ENCODE measurements at regions of chr4 and their contacts with region 1.

Region 1: GRCh38 chr4:123564758-123565346 is 168.3 kb downstream of the SPRY1 start:
- DNase-seq: no peak
- ATAC-seq: peak; percentile 100
- H3K4me3 Mint-ChIP-seq: no peak overlapping the region
- H3K27ac Mint-ChIP-seq: no peak overlapping the region
- H3K4me1 Mint-ChIP-seq: peaks cover 3% of the 10 kb centered on the region
- H3K27me3 Mint-ChIP-seq: peaks cover 8% of the 10 kb centered on the region
- CTCF ChIP-seq: no peak

Region 2: DNA sequence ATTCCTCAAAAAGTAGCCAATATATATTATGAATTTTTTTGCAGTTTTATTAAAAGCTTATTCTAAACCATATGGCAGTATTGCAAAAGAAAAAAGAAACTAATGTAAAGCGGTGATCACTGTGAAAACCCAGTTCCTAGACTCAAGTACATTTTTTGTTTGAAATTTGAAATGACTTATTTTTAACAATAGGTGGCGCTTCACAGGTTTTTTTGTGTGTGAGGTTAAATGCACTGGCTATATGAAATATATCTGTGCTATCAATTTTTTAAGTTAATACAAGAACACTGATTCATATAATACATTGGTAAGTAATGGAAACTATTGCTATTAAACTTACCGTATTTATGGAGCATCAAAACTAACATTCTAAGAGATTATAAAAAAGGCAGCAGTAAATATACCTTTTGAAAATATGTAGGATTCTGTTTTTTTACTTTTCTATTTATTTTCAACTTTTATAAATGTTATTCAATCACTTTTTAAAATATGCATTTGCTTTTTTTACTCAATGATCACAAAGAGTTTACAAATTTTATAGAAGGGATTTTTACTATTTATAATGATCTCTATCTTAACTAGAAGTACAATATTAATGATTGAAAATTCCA is 173.9 kb before region 1 on chr4:
- CTCF ChIA-PET with region 1: interaction called, 30 read pairs
- POLR2A ChIA-PET with region 1: no interaction called
- intact Hi-C with region 1: loop called (anchors 1 kb)
- DNase-seq: no peak
- ATAC-seq: no peak
- H3K4me3 Mint-ChIP-seq: no peak overlapping the region
- H3K27ac Mint-ChIP-seq: no peak overlapping the region
- H3K4me1 Mint-ChIP-seq: no peaks in the 10 kb centered on the region
- H3K27me3 Mint-ChIP-seq: no peaks in the 10 kb centered on the region
- CTCF ChIP-seq: no peak

Region 3: DNA sequence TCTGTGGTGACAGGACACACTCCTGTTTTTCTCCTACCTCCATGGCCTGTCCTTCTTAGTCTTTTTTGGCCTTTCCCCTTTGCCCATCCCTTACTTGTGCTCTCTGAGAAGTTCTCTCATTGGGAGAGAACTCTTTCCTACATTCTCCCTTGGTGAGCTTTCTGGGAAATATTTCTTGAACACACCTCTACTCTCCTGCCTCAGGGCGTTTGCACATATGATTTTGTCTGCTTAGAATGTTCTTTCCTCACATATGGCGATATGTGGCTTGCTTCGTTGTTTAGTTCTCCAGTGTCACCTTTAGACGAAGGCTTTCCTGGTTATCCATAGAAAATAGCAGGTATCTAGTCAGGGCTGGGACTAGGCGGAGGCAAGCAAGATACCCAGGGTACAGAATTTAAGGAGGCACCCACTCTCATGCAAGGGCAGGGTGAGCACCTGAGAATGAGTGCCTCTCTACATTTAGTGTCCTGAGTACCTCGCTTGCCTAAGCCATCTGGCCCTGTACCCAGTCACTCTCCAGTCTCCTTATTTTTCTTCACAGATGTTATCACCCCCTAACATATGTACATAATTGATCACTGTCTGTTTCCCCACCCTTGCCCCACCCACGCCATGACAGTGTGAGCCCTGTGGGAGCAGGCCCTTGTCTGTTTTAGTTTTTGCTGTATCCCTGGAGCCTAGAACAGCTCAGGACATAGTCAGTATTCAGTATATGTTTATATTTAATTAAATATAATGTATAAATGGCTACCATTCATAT is 54.8 kb before region 1 on chr4:
- CTCF ChIA-PET with region 1: no interaction called
- POLR2A ChIA-PET with region 1: no interaction called
- intact Hi-C with region 1: no loop called
- DNase-seq: no peak
- ATAC-seq: no peak
- H3K4me3 Mint-ChIP-seq: no peak overlapping the region
- H3K27ac Mint-ChIP-seq: no peak overlapping the region
- H3K4me1 Mint-ChIP-seq: peaks cover 24% of the 10 kb centered on the region
- H3K27me3 Mint-ChIP-seq: peaks cover 5% of the 10 kb centered on the region
- CTCF ChIP-seq: no peak

Region 4: DNA sequence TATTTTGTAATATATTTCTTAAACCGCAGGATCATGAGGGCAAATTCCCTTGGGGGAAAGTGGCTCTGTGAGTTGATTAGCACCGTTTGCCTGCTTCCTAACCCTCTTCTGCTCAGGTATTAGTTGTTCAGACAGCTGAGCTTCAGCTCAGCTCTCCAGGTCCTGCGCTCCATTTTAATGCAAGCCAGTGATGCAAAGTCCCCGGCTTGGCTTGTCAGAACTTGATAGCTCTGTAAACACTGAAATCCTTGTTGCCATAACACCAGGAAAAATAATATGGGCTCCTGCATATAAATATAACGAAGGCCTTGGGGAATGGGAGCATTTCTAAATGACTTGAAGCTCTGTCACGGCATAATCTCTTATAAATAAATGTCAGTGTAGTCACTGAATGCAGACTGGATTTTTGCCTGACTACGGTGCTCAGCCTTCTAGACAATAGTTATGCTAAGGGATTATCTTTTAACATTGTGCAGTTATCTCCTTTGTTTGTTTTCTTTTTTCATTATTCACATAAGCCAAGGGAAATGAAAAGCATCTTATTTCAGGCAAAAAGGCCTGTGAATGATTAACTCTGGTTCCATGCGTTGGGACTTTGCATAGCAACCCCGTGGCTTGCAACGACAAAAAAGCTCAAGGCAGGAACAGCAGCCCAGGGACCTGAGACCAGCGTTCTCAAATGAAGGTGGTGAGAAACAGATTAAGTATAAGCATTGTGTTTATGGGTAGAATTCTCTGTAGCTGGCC is 85.0 kb after region 1 on chr4:
- CTCF ChIA-PET with region 1: no interaction called
- POLR2A ChIA-PET with region 1: no interaction called
- intact Hi-C with region 1: loop called (anchors 2 kb)
- DNase-seq: no peak
- ATAC-seq: peak; percentile 50
- H3K4me3 Mint-ChIP-seq: no peak overlapping the region
- H3K27ac Mint-ChIP-seq: no peak overlapping the region
- H3K4me1 Mint-ChIP-seq: peaks cover 17% of the 10 kb centered on the region
- H3K27me3 Mint-ChIP-seq: no peaks in the 10 kb centered on the region
- CTCF ChIP-seq: no peak

Region 5: DNA sequence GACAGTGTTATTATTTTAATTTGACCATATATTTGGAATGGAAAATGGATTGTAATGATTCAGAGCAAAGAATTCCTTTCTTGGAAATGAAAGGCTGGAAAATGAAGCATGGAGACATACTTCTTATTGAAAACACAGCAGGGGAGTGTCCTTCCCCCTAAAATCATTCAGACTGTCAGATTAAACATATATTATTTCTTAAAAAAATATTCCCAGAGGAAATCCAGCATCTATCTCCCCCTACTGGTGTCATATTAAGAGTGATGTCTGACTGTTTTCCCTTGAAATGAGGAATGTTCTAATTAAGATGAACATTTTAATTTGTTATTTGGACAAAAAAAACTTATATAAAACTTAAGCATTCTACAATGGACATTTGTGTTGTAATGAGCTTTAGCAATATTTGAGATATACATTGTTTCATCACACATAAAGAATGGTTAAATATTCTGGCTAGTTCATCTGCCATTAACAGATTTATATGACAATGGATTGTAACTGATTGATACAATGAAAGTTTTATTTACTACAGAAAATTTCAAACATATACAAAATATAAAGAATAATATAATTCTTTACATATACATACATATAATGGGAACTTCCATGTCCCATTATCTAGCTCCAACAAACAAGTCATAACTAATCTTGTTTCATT is 96.4 kb after region 1 on chr4:
- CTCF ChIA-PET with region 1: interaction called, 5 read pairs
- POLR2A ChIA-PET with region 1: no interaction called
- intact Hi-C with region 1: loop called (anchors 1 kb)
- DNase-seq: no peak
- ATAC-seq: no peak
- H3K4me3 Mint-ChIP-seq: no peak overlapping the region
- H3K27ac Mint-ChIP-seq: no peak overlapping the region
- H3K4me1 Mint-ChIP-seq: peaks cover 12% of the 10 kb centered on the region
- H3K27me3 Mint-ChIP-seq: peaks cover 17% of the 10 kb centered on the region
- CTCF ChIP-seq: no peak

Region 6: GRCh38 chr4:124219389-124219788 is 654.5 kb after region 1 on chr4:
- CTCF ChIA-PET with region 1: no interaction called
- POLR2A ChIA-PET with region 1: no interaction called
- intact Hi-C with region 1: no loop called
- DNase-seq: no peak
- ATAC-seq: no peak
- H3K4me3 Mint-ChIP-seq: no peak overlapping the region
- H3K27ac Mint-ChIP-seq: no peak overlapping the region
- H3K4me1 Mint-ChIP-seq: no peaks in the 10 kb centered on the region
- H3K27me3 Mint-ChIP-seq: no peaks in the 10 kb centered on the region
- CTCF ChIP-seq: no peak

Region 7: DNA sequence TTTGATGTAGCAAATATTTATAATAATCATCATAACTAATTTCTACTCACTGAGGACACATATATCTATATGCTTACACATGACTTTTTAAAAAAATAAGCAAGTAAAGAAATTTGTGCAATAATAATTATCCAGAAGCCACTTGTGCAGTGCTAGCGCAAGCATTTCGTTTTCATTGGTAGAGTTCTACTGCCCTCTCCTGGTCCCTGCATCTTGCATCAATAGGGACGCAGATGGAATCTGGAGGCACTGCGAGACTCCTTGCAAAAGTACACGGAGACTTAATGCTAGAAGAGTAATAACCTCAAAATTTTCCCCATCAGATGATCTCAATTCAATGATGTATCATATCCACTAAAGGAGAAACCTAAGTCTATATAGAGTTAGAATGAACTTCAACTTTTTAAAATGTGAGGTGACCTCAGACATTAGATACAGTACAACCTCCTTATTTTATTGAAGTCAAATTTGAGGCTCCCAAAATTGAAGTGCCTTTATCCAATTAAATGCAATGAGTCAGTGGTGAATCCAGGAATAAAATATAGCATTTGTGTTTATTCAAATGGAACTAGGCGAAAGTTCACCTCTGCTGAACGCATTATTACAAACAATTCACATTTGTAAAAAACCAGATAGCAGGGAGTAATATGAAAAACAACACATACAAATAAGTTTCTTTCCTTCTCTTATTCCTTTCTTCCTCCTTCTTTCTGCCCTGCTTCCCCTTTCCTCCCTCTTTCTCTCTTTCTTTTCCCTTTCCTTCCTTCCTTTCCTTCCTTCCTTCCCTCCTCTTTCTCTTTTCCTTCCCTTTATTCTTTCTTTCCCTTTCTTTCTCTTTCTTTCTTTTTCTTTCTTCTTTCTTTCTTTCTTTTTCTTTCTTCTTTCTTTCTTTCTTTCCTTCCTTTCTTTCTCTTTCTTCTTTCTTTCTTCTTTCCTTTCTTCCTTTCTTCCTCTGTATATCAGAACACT is 697.6 kb after region 1 on chr4:
- CTCF ChIA-PET with region 1: no interaction called
- POLR2A ChIA-PET with region 1: no interaction called
- intact Hi-C with region 1: loop called (anchors 2 kb)
- DNase-seq: no peak
- ATAC-seq: peak; percentile 56
- H3K4me3 Mint-ChIP-seq: no peak overlapping the region
- H3K27ac Mint-ChIP-seq: no peak overlapping the region
- H3K4me1 Mint-ChIP-seq: no peaks in the 10 kb centered on the region
- H3K27me3 Mint-ChIP-seq: no peaks in the 10 kb centered on the region
- CTCF ChIP-seq: no peak

Measured in activated B cell treated with CpG ODN at 0.5 μM for 24 hours (primary cell).